ENCODE measurements at regions of chr11 and their contacts with region 1.

Region 1: DNA sequence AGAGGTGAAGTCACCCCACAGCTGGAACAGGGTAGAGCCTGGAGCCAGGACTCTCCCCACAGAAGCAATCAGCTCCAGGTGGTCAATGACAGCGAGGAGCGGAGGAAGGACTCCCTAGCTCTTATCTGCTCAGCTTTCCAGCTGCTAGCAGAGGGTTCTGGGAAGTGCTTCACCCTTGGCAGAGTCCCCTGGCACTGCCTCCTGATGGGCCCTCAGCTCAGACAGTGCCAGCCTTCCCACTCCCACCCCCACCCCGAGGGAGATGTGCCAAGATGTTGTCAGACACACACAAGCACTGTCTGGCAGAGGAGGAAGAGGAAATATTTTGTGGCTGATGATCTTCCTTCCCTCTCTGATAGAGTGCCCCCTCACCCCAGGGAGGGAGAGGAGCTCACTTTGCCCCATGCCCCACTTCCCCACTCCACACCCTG is 44.2 kb downstream of the SLCO2B1 start:
- DNase-seq: peak; percentile 88
- ATAC-seq: peak; percentile 91 to 92

Region 2: DNA sequence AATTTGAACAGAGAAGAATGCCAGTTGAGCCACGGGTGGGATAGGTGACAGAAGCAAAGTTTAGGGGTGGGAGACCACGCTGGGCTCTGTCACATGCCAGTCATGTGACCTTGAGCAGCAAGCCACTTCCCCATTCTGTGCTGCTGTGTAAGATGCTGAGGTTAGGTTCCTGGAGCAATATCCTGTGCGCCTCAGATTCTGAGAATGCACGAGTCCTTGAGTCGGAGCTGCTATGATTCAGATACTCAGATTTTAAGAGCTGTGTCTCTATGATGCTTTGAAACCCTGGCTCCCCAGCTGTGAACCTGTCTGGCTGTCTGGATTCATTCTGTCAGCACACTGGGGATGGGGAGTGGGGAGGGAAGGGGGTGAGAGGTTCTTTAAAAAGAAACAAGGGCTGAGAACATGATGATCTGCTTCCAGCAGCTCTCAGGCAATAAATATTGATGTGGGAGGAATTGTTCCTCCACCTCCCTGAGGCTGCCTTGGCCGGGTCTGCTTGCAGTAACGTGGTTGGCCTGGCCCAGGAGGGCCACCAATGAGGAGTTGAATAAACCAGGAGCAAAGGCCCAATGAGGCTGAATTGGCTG is 20.3 kb before region 1 on chr11:
- intact Hi-C with region 1: loop called in 1 of 2 experiments (anchors 1 kb)
- DNase-seq: peak; percentile 55
- ATAC-seq: peak; percentile 74 to 82

Measured in left cardiac atrium (tissue), 4 donors.